Right ventricle myocardium inferior (tissue), 1 donor: ENCODE measurements at regions of chr22 and their contacts with region 1.

Region 1: GRCh38 chr22:39932918-39933649 is 27.1 kb upstream of the TMA7B start:
- DNase-seq: no peak
- ATAC-seq: no peak

Region 2: DNA sequence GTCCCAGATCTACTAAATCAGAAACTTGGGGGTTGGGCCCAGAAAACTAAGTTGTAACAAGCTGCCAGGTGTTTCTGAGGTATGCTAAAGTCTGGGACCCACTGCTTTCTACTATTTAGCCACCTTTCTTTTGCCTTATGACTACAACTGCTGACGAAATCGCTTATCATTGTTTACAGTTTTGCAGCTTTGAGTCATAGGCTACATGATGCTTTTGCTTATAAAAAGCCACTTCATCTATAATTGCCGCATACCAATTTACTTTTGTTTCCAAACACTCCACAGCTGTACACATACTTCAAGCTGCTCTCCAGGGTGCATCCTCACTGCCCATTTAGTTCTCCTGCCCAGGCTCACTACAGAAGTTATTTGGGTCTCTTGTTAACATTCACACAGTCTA is 184.2 kb before region 1 on chr22:
- intact Hi-C with region 1: no loop called
- DNase-seq: no peak
- ATAC-seq: no peak

Region 3: GRCh38 chr22:40009292-40009769 is 76.2 kb after region 1 on chr22:
- intact Hi-C with region 1: loop called (anchors 5 kb)
- DNase-seq: peak; percentile 57
- ATAC-seq: no peak

Region 4: DNA sequence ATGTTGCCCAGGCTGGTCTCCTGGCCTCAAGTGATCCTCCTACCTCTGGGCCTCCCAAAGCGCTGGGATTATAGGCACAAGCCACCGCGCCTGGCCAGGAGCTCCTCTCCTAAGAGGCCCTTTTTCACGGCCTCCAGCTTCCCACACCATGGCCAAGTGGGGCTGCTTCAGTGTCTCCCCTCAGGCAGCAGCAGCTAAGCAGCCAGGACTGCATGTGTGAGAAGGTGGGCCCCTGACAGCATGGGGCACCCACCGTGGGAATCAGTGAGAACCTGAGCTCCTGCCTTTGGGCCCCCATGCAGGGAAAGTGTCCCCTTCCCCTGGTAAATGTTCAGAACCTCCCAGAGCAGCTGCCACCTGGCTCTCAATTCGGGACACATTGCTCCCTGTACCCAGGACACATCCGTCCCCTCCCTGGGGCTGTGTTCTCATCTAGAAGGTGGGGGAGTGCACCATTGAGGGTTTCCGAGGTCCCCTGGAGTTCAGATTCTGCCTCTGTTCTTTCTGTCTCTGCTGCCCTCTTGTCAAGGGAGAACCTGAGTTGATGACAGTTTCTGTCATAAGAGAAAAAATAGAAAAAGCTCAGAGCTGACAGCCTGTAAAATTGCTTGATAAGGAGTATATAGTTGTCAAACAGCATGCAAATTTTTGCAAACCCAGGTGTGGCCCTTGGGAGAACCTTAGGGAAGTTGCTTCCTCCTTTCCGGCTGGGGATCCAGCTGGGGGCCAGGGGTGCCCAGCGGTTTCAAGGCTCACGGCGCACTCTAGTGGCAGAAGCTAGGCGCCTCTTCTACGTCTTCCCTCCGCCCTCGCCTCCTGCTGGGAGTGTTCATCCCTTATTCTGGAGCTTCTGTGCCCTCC is 91.3 kb after region 1 on chr22:
- intact Hi-C with region 1: loop called (anchors 2 kb)
- DNase-seq: peak; percentile 78
- ATAC-seq: peak; percentile 66